Sigmoid colon (tissue), 7 donors: ENCODE measurements at regions of chr10 and their contacts with region 1.

Region 1: DNA sequence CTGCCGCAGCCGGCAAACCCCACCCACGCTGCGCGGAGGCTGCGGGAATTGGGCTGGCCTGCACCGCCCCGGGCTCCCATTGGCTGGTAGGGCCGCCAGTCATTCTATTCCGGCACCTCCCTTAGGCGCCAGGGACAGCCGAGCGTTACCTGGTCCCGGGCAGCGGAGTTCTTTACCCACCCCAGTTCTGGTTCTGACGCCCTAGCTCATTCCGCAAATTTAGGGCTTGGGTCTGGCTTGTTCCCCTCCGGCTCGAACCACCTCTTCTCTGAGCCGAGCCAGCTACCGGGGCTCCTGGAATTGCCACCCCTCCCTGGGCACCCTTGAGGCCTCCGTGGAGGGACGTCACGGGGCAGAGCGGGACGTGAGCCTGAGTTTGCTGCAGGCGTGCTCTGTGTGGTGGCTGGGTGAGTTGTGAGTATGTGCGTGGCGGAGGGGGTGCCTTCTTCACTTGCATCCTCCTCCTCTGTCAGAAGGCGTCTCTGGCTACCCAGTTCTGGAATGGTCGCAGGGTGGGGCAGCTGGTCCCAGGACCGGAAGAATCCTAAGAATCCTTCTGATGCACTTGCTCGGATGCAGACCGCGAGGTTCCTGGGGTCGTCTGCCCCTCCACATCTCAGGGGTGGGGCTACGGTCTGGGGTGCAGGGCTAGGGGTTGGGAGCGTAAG is at the starts of genes PDZD7 and SFXN3:
- DNase-seq: peak; percentile 98
- H3K4me3 ChIP-seq: peak within 1 kb of the TSS; percentile 66 to 85 (median 76)
- H3K27ac ChIP-seq: peak within 1 kb of the TSS; percentile 91 to 98 (median 96)
- H3K4me1 ChIP-seq: peaks cover 0 to 28% (median 20%) of the 10 kb centered on the region in 4 donors
- H3K27me3 ChIP-seq: peaks cover 0 to 10% (median 0%) of the 10 kb centered on the region in 3 donors
- CTCF ChIP-seq: no peak
- EP300 ChIP-seq: no peak
- POLR2A ChIP-seq: peak; percentile 39 to 76
- total RNA-seq, gene PDZD7: 0.16 to 2.4 (median 1.3) TPM
- total RNA-seq, gene SFXN3: 17.5 to 57.1 (median 43.5) TPM

Region 2: DNA sequence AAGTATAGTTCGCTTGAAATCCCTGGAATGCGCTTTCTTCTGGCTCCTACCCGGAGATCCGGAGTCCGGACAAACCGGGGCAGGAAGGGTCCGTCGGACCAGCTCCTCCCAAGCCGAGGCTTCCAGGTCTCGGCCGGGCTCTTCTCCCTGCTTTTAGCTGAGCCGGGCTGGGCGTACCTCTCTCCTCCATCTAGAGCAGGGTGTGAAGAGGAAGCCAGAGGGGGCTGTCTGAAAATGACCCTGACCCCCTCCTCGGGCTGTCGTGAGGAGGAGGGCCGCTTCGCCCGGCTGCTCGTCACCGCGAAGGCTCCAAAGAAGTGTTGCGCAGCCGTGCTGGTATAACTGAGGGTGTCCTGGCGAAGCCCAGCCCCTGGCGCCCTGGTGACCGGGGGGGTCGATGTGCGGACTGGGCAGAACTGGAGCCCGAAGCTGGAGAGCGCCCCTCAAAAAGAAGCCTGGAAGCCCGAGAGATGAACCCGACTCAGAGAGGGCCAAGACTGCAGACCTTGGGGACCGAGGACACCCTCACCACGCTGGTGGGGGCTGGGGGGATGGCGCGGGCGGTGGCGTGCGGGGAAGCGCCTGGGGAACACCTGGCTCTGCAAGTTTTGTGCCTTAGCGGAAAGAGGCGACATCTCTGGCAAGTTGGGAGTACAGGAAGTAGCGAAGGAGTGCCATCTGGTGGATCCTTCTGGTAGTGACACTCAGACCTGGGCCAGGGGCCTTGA is 36.3 kb after region 1 on chr10:
- intact Hi-C with region 1: loop called (anchors 5 kb)
- DNase-seq: peak; percentile 85
- H3K4me3 ChIP-seq: peak overlapping the region; percentile 21 to 50 (median 46)
- H3K27ac ChIP-seq: peak overlapping the region in 2 of 4 donors; percentile 59 to 62
- H3K4me1 ChIP-seq: peaks cover 0 to 39% (median 31%) of the 10 kb centered on the region in 4 donors
- H3K27me3 ChIP-seq: peaks cover 15 to 64% (median 58%) of the 10 kb centered on the region in 3 donors
- CTCF ChIP-seq: peak; percentile 87 to 91 (median 88)
- EP300 ChIP-seq: no peak
- POLR2A ChIP-seq: no peak